Activated B cell treated with CpG ODN at 0.5 μM for 24 hours (primary cell): ENCODE measurements at regions of chr22 and their contacts with region 1.

Region 1: GRCh38 chr22:38755911-38756532 is at the start of gene SUN2:
- DNase-seq: peak; percentile 92
- ATAC-seq: peak; percentile 75
- H3K4me3 Mint-ChIP-seq: peak within 1 kb of the TSS; percentile 92
- H3K27ac Mint-ChIP-seq: peak within 1 kb of the TSS; percentile 99
- H3K4me1 Mint-ChIP-seq: peaks cover 71% of the 10 kb centered on the region
- H3K27me3 Mint-ChIP-seq: no peaks in the 10 kb centered on the region
- CTCF ChIP-seq: no peak
- total RNA-seq, gene SUN2: 122 and 146 TPM in 2 replicates

Region 2: GRCh38 chr22:38681784-38682335 is 74.2 kb before region 1 on chr22 and contains the start of gene TOMM22:
- CTCF ChIA-PET with region 1: interaction called, 3 read pairs
- POLR2A ChIA-PET with region 1: interaction called, 12 read pairs
- intact Hi-C with region 1: no loop called
- DNase-seq: peak; percentile 84
- ATAC-seq: peak; percentile 98
- H3K4me3 Mint-ChIP-seq: peak within 1 kb of the TSS; percentile 97
- H3K27ac Mint-ChIP-seq: peak within 1 kb of the TSS; percentile 92
- H3K4me1 Mint-ChIP-seq: peaks cover 20% of the 10 kb centered on the region
- H3K27me3 Mint-ChIP-seq: no peaks in the 10 kb centered on the region
- CTCF ChIP-seq: no peak
- total RNA-seq, gene TOMM22: 99.4 and 109 TPM in 2 replicates

Region 3: GRCh38 chr22:38733329-38733723 is 22.7 kb before region 1 on chr22:
- CTCF ChIA-PET with region 1: interaction called, 7 read pairs
- POLR2A ChIA-PET with region 1: interaction called, 37 read pairs
- intact Hi-C with region 1: no loop called
- DNase-seq: no peak
- ATAC-seq: peak; percentile 76
- H3K4me3 Mint-ChIP-seq: no peak overlapping the region
- H3K27ac Mint-ChIP-seq: peak overlapping the region; percentile 75
- H3K4me1 Mint-ChIP-seq: peaks cover 26% of the 10 kb centered on the region
- H3K27me3 Mint-ChIP-seq: no peaks in the 10 kb centered on the region
- CTCF ChIP-seq: peak; percentile 58

Region 4: GRCh38 chr22:38766076-38766777 is 10.2 kb after region 1 on chr22:
- CTCF ChIA-PET with region 1: interaction called, 7 read pairs
- POLR2A ChIA-PET with region 1: interaction called, 14 read pairs
- intact Hi-C with region 1: no loop called
- DNase-seq: peak; percentile 29
- ATAC-seq: peak; percentile 55
- H3K4me3 Mint-ChIP-seq: no peak overlapping the region
- H3K27ac Mint-ChIP-seq: no peak overlapping the region
- H3K4me1 Mint-ChIP-seq: peaks cover 2% of the 10 kb centered on the region
- H3K27me3 Mint-ChIP-seq: no peaks in the 10 kb centered on the region
- CTCF ChIP-seq: no peak

Region 5: DNA sequence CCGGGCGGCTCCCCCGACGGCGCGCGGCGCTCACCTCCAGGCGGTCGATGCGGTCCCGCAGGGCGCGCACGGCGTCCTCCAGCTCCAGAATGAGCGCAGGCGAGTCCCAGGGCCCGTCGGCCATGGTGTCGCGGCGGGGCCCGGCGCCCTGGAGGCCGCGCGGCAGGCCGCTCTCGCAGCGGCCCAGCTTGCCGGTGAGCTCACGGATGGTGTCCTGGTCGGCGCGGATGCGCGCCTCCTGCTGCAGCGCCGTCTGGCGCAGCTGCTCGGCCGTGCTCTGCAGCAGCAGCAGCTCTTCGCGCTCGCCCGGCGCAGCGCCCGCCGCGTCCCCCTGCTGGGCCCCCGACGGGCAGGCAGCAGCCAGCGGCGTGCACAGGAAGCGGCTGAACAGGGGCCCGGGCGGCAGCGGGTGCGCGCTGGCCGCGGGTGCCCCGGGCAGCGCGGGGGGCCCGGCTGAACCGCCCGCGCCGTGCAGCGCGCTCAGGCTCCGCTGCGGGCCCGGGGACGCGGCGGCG is 87.2 kb after region 1 on chr22:
- CTCF ChIA-PET with region 1: no interaction called
- POLR2A ChIA-PET with region 1: no interaction called
- intact Hi-C with region 1: loop called (anchors 5 kb)
- DNase-seq: peak; percentile 51
- ATAC-seq: peak; percentile 75
- H3K4me3 Mint-ChIP-seq: no peak overlapping the region
- H3K27ac Mint-ChIP-seq: no peak overlapping the region
- H3K4me1 Mint-ChIP-seq: peaks cover 13% of the 10 kb centered on the region
- H3K27me3 Mint-ChIP-seq: peaks cover 56% of the 10 kb centered on the region
- CTCF ChIP-seq: no peak